HEK293 (cell line): ENCODE measurements at regions of chr17 and their contacts with region 1.

Region 1: GRCh38 chr17:67602956-67603355 is 114.8 kb upstream of the NOL11 start:
- H3K4me3 ChIP-seq: no peak overlapping the region
- H3K27ac ChIP-seq: no peak overlapping the region
- H3K4me1 ChIP-seq: peaks cover 13% of the 10 kb centered on the region
- CTCF ChIP-seq: no peak

Region 2: DNA sequence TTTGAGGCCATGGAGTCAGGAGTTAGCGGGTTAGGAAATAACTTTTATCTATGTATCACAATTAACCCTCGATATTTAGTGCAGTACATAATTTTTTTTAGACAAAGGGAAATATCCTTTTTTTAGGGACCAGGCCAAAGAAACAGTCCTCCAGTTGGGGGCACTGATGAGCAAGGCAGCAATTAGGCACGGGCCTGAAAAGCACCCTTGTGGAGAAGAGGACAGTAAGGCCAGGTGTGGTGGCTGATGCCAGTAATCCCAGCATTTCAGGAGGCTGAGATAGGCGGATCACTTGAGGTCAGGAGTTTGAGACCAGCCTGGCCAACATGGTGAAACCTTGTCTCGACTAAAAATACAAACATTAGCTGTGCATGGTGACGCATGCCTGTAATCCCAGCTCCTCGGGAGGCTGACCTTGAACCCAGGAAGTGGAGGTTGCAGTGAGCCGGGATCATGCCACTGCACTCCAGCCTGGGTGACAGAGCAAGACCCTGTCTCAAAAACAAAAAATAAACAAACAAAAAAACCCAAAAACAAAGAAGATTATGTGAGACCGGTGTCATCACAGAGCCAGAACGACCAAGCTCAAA is 43.5 kb before region 1 on chr17:
- CTCF ChIA-PET with region 1: interaction called, 13 read pairs
- POLR2A ChIA-PET with region 1: no interaction called
- H3K4me3 ChIP-seq: no peak overlapping the region
- H3K27ac ChIP-seq: no peak overlapping the region
- H3K4me1 ChIP-seq: peaks cover 5% of the 10 kb centered on the region; the same call in 1 of the 2 replicates
- CTCF ChIP-seq: no peak

Region 3: GRCh38 chr17:67588326-67588725 is 14.6 kb before region 1 on chr17:
- CTCF ChIA-PET with region 1: interaction called, 10 read pairs
- POLR2A ChIA-PET with region 1: no interaction called
- H3K4me3 ChIP-seq: no peak overlapping the region
- H3K27ac ChIP-seq: no peak overlapping the region
- H3K4me1 ChIP-seq: peaks cover 15% of the 10 kb centered on the region
- CTCF ChIP-seq: no peak